Cardiac septum (tissue), 1 donor: ENCODE measurements at regions of chr1 and their contacts with region 1.

Region 1: GRCh38 chr1:62082456-62083363 is 111.9 kb upstream of the L1TD1 start:
- DNase-seq: no peak

Region 2: DNA sequence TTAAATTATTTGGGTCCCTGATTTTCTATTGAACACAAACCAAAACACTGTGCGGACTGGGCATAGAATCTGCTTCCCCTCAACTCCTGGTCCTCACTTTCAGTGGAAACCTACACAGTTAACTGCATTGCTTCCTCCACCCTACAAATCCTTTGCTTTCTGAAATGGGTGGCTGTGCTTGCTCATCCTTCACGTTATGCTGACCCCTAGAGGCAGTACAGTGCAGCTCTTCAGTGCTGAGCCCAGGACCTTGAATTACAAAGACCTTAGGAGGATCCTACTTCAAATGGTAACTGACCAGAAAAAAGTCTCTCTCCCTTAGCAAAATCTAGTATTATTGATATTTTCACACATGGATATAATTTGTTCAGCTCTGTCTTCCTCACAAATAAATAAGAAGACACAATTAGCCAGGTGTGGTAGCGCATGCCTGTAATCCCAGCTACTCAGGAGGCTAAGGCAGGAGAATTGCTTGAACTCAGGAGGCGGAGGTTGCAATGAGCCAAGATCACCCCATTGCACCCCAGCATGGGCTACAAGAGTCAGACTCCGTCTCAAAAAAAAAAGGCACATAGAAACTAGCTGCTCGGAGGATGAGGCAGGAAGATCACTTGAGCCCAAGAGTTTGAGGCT is 48.5 kb after region 1 on chr1:
- intact Hi-C with region 1: loop called (anchors 5 kb)
- DNase-seq: no peak

Region 3: GRCh38 chr1:62144238-62144831 is 61.6 kb after region 1 on chr1:
- intact Hi-C with region 1: loop called (anchors 5 kb)
- DNase-seq: no peak